Right ventricle myocardium superior (tissue), 1 donor: ENCODE measurements at regions of chr13 and their contacts with region 1.

Region 1: GRCh38 chr13:30132623-30133553 is 174.5 kb downstream of the KATNAL1 start:
- DNase-seq: peak; percentile 99
- ATAC-seq: peak; percentile 98

Region 2: GRCh38 chr13:30334663-30335386 is 201.9 kb after region 1 on chr13:
- intact Hi-C with region 1: loop called (anchors 10 kb)
- DNase-seq: no peak
- ATAC-seq: no peak

Region 3: DNA sequence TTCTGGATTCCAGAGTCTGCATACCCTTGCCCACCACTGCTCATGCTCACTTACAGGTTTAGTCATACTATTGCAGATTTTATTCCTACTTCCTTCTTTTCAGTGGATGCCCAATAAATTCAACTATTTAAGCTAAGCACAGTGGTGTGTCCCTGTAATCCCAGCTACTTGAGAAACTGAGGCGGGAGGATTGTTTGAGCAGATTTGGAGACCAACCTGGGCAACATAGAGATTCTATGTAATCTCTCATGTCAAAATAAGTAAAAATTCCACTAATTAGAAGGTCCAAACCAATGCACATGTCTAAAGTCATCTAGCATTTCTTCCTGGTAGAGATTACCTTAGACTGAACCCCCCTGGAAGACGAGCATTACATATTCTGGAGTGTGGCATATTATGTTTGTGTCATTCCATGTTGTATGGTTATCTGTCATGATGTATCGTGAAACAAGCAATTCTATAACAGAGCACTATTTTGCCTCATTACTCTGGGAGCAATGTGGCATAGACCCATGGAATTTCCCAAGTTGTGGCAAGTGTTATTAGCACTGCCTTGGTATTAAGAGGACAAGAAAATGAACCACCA is 324.5 kb after region 1 on chr13:
- intact Hi-C with region 1: loop called (anchors 5 kb)
- DNase-seq: no peak
- ATAC-seq: no peak

Region 4: GRCh38 chr13:30802953-30803478 is 670.1 kb after region 1 on chr13:
- intact Hi-C with region 1: loop called (anchors 5 kb)
- DNase-seq: peak; percentile 93
- ATAC-seq: peak; percentile 99